Heart right ventricle (tissue), 16 donors: ENCODE measurements at regions of chr20 and their contacts with region 1.

Region 1: DNA sequence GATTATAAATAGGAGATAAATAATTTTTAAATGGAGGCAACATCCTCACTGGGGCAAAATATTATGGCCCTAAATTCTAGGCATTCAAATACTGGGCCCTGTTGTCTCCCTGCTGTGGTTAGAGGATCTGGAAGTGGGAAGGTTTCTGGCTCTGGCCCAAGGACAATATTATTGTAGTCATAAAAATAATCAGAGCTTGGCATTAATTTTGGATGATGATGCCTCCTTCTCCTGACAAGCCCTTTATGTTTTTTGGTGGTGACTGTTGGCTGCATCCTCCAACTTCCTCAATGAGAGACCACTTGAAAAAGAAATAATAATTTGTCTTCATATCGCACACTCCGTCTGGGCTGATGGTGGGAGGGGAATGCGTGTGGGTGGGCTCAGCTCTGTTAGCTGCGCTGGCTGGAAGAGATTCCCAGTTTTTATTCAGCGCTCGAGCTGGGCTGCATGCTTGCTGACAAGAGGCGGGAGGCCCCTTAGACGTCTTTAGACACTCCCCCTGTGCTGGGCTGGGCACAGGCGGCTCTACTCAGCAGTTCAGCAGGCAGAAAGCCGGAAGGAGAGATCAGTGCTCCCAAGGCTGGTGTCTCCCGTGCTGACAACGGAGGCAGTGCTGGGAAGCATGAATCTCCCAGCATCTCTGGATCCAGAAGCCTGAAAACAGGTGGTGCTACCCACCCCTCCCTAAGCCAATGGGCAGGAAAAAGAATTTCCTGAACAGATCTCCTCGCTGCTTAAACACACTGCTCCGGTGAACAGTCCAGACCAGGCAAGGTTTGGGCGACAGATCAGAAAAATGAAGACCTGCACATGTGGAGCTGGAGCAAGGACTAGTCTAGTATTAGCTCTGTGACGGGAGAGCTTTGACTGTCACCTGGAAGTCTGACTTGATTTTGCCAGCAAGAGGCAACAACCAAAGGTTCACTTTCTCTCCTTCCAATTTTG is 97.7 kb downstream of the SYCP2 start:
- DNase-seq: peak; percentile 36 to 40
- ATAC-seq: peak; percentile 54 to 81 (median 74)
- H3K4me3 ChIP-seq: peak overlapping the region in 8 of 10 donors; percentile 7 to 45 (median 38)
- H3K27ac ChIP-seq: peak overlapping the region in 7 of 10 donors; percentile 31 to 67 (median 38)
- H3K4me1 ChIP-seq: peaks cover 6 to 68% (median 44%) of the 10 kb centered on the region in 9 donors
- H3K27me3 ChIP-seq: peaks cover 0 to 7% (median 0%) of the 10 kb centered on the region in 7 donors
- CTCF ChIP-seq: no peak

Region 2: DNA sequence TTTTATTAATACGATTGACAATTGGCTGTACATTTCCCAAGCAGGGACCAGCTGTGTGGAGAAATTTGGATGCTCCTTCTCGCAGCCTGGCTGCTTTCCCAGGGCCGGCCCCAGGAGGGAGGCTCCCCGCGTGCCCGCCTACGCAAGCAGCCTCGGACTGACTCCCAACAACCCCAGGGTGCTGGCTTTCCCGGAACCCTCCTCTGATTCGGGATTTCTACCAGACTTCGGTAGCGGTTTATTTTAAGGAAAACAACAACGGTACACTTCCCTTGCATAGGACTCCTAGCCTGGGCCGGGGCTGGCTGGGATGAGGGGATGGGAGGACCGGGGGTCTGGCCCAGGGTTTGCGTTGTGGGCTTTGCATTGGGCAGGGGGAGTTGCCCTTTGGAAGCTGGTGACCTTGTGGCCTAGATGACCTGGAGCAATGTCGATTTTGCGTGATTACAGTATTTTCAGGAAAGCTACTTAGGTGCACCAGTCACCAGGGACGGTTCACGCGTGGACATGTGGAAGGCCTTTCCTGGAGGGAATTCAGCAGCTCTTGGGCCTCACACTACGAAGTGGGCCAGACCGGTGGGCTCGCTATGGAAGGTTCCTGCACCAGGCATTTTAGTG is 252.2 kb before region 1 on chr20:
- intact Hi-C with region 1: loop called in 2 of 10 experiments (anchors 10 kb)
- DNase-seq: peak; percentile 75 to 86
- ATAC-seq: peak; percentile 64 to 83 (median 78)
- H3K4me3 ChIP-seq: no peak overlapping the region
- H3K27ac ChIP-seq: peak overlapping the region in 4 of 10 donors; percentile 9 to 73 (median 50)
- H3K4me1 ChIP-seq: peaks cover 0 to 31% (median 13%) of the 10 kb centered on the region in 9 donors
- H3K27me3 ChIP-seq: peaks cover 0 to 18% (median 11%) of the 10 kb centered on the region in 7 donors
- CTCF ChIP-seq: no peak